ENCODE measurements at regions of chr22 and their contacts with region 1.

Region 1: GRCh38 chr22:21816787-21817496 is 50.5 kb downstream of the MAPK1 start:
- DNase-seq: peak; percentile 33 to 87
- ATAC-seq: peak; percentile 89 to 94 (median 90)
- H3K4me3 ChIP-seq: no peak overlapping the region
- H3K4me3 Mint-ChIP-seq: peak overlapping the region; percentile 88
- H3K27ac ChIP-seq: peak overlapping the region; percentile 88
- H3K27ac Mint-ChIP-seq: peak overlapping the region; percentile 93 to 97
- H3K4me1 ChIP-seq: peaks cover 61% of the 10 kb centered on the region
- H3K4me1 Mint-ChIP-seq: peaks cover 70 to 78% of the 10 kb centered on the region in 2 donors
- H3K27me3 ChIP-seq: no peaks in the 10 kb centered on the region
- H3K27me3 Mint-ChIP-seq: no peaks in the 10 kb centered on the region
- CTCF ChIP-seq: no peak

Region 2: GRCh38 chr22:21780259-21780658 is 36.7 kb before region 1 on chr22:
- intact Hi-C with region 1: loop called (anchors 5 kb)
- DNase-seq: peak; percentile 43 to 60
- ATAC-seq: peak; percentile 91 to 99 (median 92)
- H3K4me3 ChIP-seq: no peak overlapping the region
- H3K4me3 Mint-ChIP-seq: peak overlapping the region; percentile 74
- H3K27ac ChIP-seq: no peak overlapping the region
- H3K27ac Mint-ChIP-seq: peak overlapping the region; percentile 84 to 87
- H3K4me1 ChIP-seq: peaks cover 32% of the 10 kb centered on the region
- H3K4me1 Mint-ChIP-seq: peaks cover 42 to 55% of the 10 kb centered on the region in 2 donors
- H3K27me3 ChIP-seq: no peaks in the 10 kb centered on the region
- H3K27me3 Mint-ChIP-seq: no peaks in the 10 kb centered on the region
- CTCF ChIP-seq: no peak

Region 3: GRCh38 chr22:21832291-21833290 is 15.6 kb after region 1 on chr22:
- intact Hi-C with region 1: loop called (anchors 2 kb)
- DNase-seq: peak; percentile 39 to 42
- ATAC-seq: peak; percentile 86 to 93 (median 88)
- H3K4me3 ChIP-seq: no peak overlapping the region
- H3K4me3 Mint-ChIP-seq: peak overlapping the region; percentile 77
- H3K27ac ChIP-seq: peak overlapping the region; percentile 26
- H3K27ac Mint-ChIP-seq: peak overlapping the region; percentile 60 to 80
- H3K4me1 ChIP-seq: peaks cover 31% of the 10 kb centered on the region
- H3K4me1 Mint-ChIP-seq: peaks cover 80 to 83% of the 10 kb centered on the region in 2 donors
- H3K27me3 ChIP-seq: no peaks in the 10 kb centered on the region
- H3K27me3 Mint-ChIP-seq: no peaks in the 10 kb centered on the region
- CTCF ChIP-seq: no peak

Measured in natural killer cell (primary cell).